Activated CD8-positive, alpha-beta T cell treated with anti-CD3 and anti-CD28 coated beads for 36 hours (primary cell): ENCODE measurements at regions of chr20 and their contacts with region 1.

Region 1: GRCh38 chr20:62953839-62954703 is 1.6 kb downstream of the SLC17A9 start:
- DNase-seq: peak; percentile 89
- ATAC-seq: peak; percentile 86
- H3K4me3 Mint-ChIP-seq: peak overlapping the region; percentile 85
- H3K27ac Mint-ChIP-seq: peak overlapping the region; percentile 90
- H3K4me1 Mint-ChIP-seq: peaks cover 24% of the 10 kb centered on the region
- H3K27me3 Mint-ChIP-seq: no peaks in the 10 kb centered on the region
- CTCF ChIP-seq: no peak

Region 2: DNA sequence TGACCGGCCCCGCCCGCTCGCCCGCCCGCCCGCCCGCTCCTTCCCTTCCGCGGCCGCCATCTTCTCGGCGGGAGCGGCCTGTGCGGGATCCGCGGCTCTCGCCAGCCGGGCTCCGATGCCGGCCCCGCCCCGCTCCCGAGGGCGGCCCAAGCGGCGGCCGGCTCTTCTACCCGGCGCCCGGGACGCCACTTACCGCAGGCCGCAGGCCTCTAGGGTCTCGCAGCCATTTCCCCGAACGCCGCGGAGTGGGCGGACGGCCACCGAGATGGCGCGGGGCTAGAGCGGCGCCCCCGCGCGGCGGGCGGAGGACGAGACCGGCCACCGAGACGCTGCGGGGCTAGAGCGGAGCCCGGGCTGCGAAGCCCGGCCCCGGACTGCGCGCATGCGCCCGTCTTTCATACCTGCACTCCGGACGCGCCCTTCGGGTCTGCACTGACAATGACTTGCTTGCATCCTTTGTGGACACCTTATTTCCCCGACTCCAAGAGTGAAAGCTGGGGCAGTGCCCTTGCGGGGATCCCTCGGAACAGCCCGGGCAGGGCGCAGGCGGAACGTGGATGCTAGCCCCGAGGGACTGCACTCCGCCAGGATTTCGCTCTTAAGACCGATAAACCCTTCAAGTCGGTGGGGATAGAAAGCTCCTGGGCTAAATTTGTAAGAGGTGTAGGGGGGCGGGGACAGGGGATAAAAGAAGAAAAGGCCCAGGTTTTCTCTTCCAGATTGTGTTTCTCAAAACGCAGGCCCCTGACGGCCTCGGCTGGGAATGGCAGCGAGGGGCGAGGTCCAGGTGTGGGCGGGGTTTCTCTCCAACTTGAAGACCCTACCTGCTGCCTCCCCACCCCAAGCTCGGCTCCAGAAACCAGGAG is 27.6 kb before region 1 on chr20 and contains the start of gene DIDO1:
- CTCF ChIA-PET with region 1: interaction called, 6 read pairs
- POLR2A ChIA-PET with region 1: interaction called, 12 read pairs
- intact Hi-C with region 1: no loop called
- DNase-seq: peak; percentile 89
- ATAC-seq: peak; percentile 75
- H3K4me3 Mint-ChIP-seq: peak within 1 kb of the TSS; percentile 97
- H3K27ac Mint-ChIP-seq: peak within 1 kb of the TSS; percentile 95
- H3K4me1 Mint-ChIP-seq: peaks cover 64% of the 10 kb centered on the region
- H3K27me3 Mint-ChIP-seq: no peaks in the 10 kb centered on the region
- CTCF ChIP-seq: peak; percentile 46
- total RNA-seq, gene DIDO1: 45.9 to 47.4 TPM

Region 3: DNA sequence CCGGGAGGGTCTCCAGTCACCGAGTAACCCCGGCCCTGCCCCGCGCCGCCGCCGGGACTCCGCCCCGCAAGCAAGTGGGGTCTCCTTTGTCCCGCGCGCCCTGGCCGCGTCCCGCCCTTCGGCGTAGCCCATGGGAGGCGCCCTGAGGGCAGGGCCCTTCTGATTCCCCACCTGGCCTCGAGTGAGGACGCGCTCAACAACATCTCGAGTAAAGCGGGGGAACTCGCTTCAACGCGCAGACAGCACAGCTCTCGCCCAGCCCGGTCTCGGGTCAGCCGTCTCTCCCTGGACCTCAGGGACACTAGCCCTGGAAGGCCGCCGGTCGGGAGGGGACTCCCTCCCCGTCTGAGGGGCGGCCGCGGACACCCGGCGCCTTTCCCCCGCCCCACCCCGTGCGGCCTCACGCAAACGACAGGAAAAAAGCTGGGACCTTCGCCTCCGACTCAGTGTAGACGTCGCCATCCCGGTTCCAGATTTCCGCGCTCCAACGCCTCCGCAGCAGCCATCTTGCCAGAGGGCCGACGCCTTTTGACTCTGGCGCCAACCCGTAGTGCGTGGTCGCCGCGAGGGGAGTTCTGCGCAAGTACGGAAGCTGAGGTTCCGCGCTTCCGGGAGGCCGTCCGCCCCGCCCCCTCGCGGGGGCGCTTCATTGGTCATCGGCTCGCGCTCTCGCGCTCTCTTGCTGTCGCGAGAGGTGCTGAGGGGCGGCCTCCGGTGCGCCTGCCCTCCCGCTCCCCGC is 16.5 kb before region 1 on chr20:
- CTCF ChIA-PET with region 1: interaction called, 8 read pairs
- POLR2A ChIA-PET with region 1: interaction called, 29 read pairs
- intact Hi-C with region 1: no loop called
- DNase-seq: peak; percentile 98
- ATAC-seq: peak; percentile 93
- H3K4me3 Mint-ChIP-seq: no peak overlapping the region
- H3K27ac Mint-ChIP-seq: peak overlapping the region; percentile 98
- H3K4me1 Mint-ChIP-seq: peaks cover 31% of the 10 kb centered on the region
- H3K27me3 Mint-ChIP-seq: no peaks in the 10 kb centered on the region
- CTCF ChIP-seq: no peak

Region 4: GRCh38 chr20:62972270-62973032 is 18.4 kb after region 1 on chr20:
- CTCF ChIA-PET with region 1: interaction called, 17 read pairs
- POLR2A ChIA-PET with region 1: interaction called, 8 read pairs
- intact Hi-C with region 1: no loop called
- DNase-seq: peak; percentile 92
- ATAC-seq: peak; percentile 99
- H3K4me3 Mint-ChIP-seq: no peak overlapping the region
- H3K27ac Mint-ChIP-seq: no peak overlapping the region
- H3K4me1 Mint-ChIP-seq: peaks cover 19% of the 10 kb centered on the region
- H3K27me3 Mint-ChIP-seq: peaks cover 39% of the 10 kb centered on the region
- CTCF ChIP-seq: peak; percentile 66